Left lung (tissue), 14 donors: ENCODE measurements at regions of chr9 and their contacts with region 1.

Region 1: GRCh38 chr9:34546834-34547827 is 24.3 kb upstream of the ENHO start:
- DNase-seq: peak in 1 of 4 donors; percentile 67
- ATAC-seq: peak; percentile 86
- H3K4me3 ChIP-seq: no peak overlapping the region
- H3K27ac ChIP-seq: no peak overlapping the region
- H3K4me1 ChIP-seq: no peaks in the 10 kb centered on the region
- H3K27me3 ChIP-seq: peaks cover 0 to 24% of the 10 kb centered on the region in 2 donors
- CTCF ChIP-seq: peak; percentile 43 to 70

Region 2: GRCh38 chr9:34291023-34291422 is 256.1 kb before region 1 on chr9:
- intact Hi-C with region 1: no loop called
- DNase-seq: no peak
- ATAC-seq: peak; percentile 50
- H3K4me3 ChIP-seq: no peak overlapping the region
- H3K27ac ChIP-seq: peak overlapping the region in 1 of 2 donors; percentile 63
- H3K4me1 ChIP-seq: no peaks in the 10 kb centered on the region
- H3K27me3 ChIP-seq: no peaks in the 10 kb centered on the region
- CTCF ChIP-seq: no peak

Region 3: DNA sequence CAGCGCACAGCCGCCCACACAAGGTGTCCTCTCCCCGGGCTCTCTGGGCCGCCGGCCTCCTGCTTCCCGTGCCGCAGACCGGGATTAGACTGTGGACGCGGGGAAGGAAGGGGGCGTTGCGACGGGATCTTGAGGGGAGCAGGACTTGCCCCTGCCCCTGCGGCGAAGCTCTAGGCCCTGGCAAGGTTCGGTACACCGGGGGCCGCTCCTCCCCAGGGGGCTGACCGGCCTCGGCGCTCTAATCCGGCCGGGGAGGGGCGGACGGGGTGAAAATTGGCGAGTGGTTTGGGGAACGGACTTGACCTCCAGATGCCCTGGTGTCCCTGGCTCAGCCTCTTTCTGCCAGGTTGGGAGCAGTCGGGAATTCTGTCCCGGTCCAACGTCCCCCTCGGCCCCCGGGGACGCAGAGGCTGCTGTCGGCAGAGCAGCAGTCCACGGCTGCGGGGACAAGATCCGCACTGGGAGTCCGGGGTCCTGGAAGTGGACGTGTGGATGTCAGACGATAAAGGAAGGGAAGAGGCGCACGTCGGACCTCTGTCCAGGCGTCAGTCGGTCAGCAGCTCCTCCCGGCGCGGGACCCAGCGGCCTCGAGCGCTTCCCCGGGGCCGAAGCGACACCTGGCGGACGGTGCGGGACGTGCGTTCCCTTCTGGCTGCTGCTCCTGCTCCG is 44.3 kb after region 1 on chr9:
- intact Hi-C with region 1: loop called in 1 of 2 experiments (anchors 5 kb)
- DNase-seq: peak in 3 of 4 donors; percentile 85 to 98 (median 87)
- ATAC-seq: peak; percentile 96
- H3K4me3 ChIP-seq: peak overlapping the region; percentile 4 to 40
- H3K27ac ChIP-seq: no peak overlapping the region
- H3K4me1 ChIP-seq: peaks cover 21 to 45% of the 10 kb centered on the region in 2 donors
- H3K27me3 ChIP-seq: peaks cover 52 to 85% of the 10 kb centered on the region in 2 donors
- CTCF ChIP-seq: peak; percentile 89 to 93

Region 4: DNA sequence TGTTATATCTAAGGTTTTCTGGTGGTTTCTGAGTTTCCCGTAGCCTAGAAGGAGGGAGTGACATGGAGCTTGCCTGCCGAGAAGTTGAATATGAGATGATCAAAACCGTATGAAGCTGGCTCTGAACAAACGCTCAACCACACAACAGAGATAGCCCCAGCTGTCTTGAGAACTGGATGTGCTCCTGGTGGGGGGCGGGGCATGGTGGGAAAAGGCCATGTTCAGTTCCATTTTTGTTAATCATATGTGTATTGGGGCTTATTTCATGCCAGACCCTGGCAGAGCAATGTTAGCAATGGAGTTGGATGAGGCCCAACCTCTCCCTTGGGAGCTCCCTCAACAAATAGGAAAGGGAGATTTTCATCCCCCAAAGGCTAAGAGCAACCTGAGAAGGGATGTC is 139.1 kb after region 1 on chr9:
- intact Hi-C with region 1: no loop called
- DNase-seq: no peak
- ATAC-seq: no peak
- H3K4me3 ChIP-seq: no peak overlapping the region
- H3K27ac ChIP-seq: no peak overlapping the region
- H3K4me1 ChIP-seq: peaks cover 0 to 8% of the 10 kb centered on the region in 2 donors
- H3K27me3 ChIP-seq: no peaks in the 10 kb centered on the region
- CTCF ChIP-seq: no peak